ENCODE measurements at regions of chr17 and their contacts with region 1.

Region 1: DNA sequence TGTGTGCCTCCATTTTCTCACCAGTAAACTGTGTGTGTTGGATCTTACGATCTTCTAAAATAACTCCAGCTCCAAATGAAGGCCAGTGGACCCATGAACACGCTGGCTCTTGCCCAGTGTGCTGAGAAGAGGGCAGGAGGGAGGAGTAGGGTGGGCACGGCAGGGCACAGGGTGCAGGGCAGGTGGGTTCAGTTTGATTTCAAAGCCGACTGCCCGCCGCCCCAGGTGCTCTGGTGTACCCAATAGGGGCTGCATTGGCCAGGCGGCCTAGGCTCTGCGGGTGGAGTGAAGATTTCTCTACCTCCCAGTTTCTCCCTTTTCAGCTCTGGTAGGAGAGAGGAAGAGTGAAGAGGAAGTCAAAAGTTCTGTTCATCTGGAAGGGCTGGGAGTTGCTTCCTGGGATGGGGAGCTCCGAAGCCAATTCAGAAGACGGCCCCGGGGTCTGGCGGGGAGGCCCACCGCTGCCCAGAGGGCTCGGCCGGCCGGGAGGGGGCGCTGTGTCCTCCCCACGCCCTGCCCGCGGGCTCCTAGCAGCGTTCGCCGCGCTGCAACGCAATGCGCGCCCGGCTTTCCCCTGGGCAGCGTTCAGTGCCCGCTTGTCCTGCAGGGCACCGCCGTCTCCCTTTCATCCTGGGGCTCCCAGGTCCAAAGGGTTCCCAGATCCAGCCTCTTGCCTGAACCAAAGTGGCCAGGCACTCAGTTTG is 1.1 kb upstream of the CRHR1 start:
- DNase-seq: peak; percentile 80
- ATAC-seq: peak; percentile 58
- H3K4me3 Mint-ChIP-seq: peak overlapping the region; percentile 87
- H3K27ac Mint-ChIP-seq: no peak overlapping the region
- H3K4me1 Mint-ChIP-seq: peaks cover 43% of the 10 kb centered on the region
- H3K27me3 Mint-ChIP-seq: peaks cover 65% of the 10 kb centered on the region
- CTCF ChIP-seq: peak; percentile 83

Region 2: DNA sequence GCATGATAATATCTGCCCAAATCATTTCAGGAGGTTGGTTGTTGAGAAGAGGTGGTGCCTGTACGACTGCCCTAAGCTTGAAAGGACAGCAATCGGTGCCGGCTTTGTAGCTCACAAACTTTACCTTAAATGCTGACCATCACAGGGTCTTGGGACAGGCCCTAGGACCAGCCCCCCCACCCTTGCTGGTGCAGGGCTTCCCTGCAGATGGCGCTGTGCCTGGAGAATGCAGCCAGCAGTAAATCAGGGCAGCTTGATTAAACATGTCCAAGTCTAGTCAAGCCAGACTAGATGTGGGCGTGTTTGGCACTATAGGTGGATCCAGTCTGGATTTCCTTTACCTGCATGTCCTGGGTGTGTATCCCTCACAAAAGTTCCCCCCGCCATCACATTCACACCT is 134.4 kb before region 1 on chr17:
- CTCF ChIA-PET with region 1: interaction called, 13 read pairs
- POLR2A ChIA-PET with region 1: no interaction called
- DNase-seq: peak; percentile 80
- ATAC-seq: peak; percentile 85
- H3K4me3 Mint-ChIP-seq: no peak overlapping the region
- H3K27ac Mint-ChIP-seq: no peak overlapping the region
- H3K4me1 Mint-ChIP-seq: peaks cover 16% of the 10 kb centered on the region
- H3K27me3 Mint-ChIP-seq: no peaks in the 10 kb centered on the region
- CTCF ChIP-seq: peak; percentile 70

Region 3: GRCh38 chr17:45719335-45720071 is 63.5 kb before region 1 on chr17:
- CTCF ChIA-PET with region 1: interaction called, 57 read pairs
- POLR2A ChIA-PET with region 1: no interaction called
- DNase-seq: peak; percentile 39
- ATAC-seq: peak; percentile 75
- H3K4me3 Mint-ChIP-seq: no peak overlapping the region
- H3K27ac Mint-ChIP-seq: no peak overlapping the region
- H3K4me1 Mint-ChIP-seq: peaks cover 15% of the 10 kb centered on the region
- H3K27me3 Mint-ChIP-seq: peaks cover 10% of the 10 kb centered on the region
- CTCF ChIP-seq: no peak; the same call in 1 of the 2 replicates

Region 4: DNA sequence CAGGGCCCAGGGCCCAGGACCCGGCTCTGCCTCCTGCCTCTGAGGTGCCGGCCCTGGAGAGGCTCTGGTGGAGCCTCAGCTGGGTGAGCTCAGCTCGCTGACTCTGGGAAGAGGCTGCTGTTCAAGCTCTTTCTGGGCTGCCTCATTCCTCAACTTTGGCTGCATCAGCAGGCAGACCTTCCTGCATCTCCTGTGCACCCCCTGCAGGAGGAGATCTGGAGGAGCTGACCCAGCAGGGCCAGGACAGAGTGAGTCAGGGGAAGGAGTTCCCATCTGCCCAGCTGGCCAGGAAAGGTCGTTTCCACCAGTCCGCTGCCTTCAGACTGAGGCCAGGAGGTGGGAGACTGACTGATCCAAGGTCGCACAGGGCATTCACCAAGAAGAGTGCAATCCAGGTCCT is 11.8 kb after region 1 on chr17:
- CTCF ChIA-PET with region 1: interaction called, 87 read pairs
- POLR2A ChIA-PET with region 1: no interaction called
- DNase-seq: peak; percentile 56
- ATAC-seq: peak; percentile 81
- H3K4me3 Mint-ChIP-seq: no peak overlapping the region
- H3K27ac Mint-ChIP-seq: no peak overlapping the region
- H3K4me1 Mint-ChIP-seq: peaks cover 29% of the 10 kb centered on the region
- H3K27me3 Mint-ChIP-seq: peaks cover 2% of the 10 kb centered on the region; the same call in 1 of the 2 replicates
- CTCF ChIP-seq: no peak

Region 5: DNA sequence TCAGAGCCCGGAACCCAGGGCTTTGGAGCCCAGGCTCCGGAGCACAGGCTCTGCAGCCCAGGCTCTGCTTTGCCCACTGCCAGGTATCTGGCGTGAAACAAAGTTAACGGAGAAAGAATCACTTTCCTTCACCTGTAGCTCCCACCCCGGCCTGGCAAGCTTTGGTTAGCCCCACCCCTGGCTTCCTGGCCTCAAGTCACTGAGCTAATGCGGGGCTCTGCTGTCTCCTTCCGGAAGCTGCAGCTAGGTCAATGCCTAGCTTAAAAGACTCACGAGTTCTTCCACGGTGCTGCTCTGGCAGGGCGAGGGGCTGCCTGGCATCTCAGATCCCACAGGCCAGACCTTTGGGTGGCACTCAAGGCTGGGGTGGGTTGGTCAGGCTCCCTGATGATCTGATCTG is 40.6 kb after region 1 on chr17:
- CTCF ChIA-PET with region 1: interaction called, 103 read pairs
- POLR2A ChIA-PET with region 1: no interaction called
- DNase-seq: no peak
- ATAC-seq: no peak
- H3K4me3 Mint-ChIP-seq: no peak overlapping the region
- H3K27ac Mint-ChIP-seq: no peak overlapping the region
- H3K4me1 Mint-ChIP-seq: no peaks in the 10 kb centered on the region
- H3K27me3 Mint-ChIP-seq: no peaks in the 10 kb centered on the region
- CTCF ChIP-seq: no peak

Region 6: DNA sequence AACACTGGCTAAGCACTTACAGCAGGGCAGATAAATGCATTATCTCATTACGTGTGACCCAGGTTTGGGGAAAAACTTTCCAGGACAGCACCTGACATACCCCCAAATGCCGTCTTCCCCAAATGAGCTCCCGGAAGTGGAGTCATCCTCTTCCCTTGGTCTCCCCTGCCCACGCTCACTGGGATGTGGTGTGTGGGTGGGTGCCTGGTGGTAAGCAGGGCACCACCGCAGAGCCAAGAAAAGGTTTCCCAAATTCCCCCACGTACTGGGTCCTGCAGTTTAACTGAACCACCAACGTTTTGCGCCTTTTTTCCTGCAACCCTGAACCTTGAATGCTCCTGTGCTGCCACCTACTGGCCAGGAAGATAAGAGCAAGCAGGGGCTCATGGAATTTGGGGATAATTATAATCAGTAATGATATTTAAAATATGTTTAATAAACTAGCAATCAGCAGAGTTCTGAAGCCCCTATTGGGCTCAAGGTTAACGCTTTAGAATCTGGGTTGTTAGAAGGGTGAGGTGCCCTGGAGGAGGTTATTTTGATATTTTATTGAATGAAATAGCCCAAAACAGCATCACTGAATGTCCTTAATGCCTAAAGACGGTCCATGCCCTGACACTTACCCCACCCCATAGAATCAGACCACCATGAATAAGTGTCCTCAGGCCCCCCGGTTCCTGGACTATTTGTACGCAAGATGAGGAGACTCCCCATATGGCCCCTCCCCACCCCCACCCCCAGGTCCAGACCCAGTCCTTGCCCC is 69.7 kb after region 1 on chr17:
- CTCF ChIA-PET with region 1: interaction called, 13 read pairs
- POLR2A ChIA-PET with region 1: no interaction called
- DNase-seq: peak; percentile 76
- ATAC-seq: peak; percentile 65
- H3K4me3 Mint-ChIP-seq: no peak overlapping the region
- H3K27ac Mint-ChIP-seq: no peak overlapping the region
- H3K4me1 Mint-ChIP-seq: no peaks in the 10 kb centered on the region
- H3K27me3 Mint-ChIP-seq: peaks cover 5% of the 10 kb centered on the region
- CTCF ChIP-seq: peak; percentile 89